Activated CD4-positive, alpha-beta T cell treated with anti-CD3 and anti-CD28 coated beads for 36 hours (primary cell): ENCODE measurements at regions of chr17 and their contacts with region 1.

Region 1: DNA sequence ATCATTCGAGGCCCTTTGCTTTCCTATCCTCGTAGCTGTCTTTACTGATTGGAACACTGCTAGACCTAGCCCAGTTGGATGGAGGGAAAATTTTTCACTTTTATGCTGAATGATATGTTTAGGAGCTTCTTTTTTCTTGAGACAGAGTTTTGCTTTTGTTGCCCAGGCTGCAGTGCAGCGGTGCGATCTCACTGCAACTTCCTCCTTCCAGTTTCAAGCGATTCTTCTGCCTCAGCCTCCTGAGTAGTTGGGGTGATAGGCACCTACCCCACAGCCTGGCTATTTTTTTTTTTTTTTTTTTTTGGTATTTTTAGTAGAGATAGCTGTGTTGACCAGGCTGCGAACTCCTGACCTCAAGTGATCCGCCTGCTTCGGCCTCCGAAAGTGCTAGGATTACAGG is 17.3 kb upstream of the PSMC5 start:
- DNase-seq: no peak
- ATAC-seq: no peak
- H3K4me3 Mint-ChIP-seq: no peak overlapping the region
- H3K27ac Mint-ChIP-seq: no peak overlapping the region
- H3K4me1 Mint-ChIP-seq: peaks cover 7% of the 10 kb centered on the region
- H3K27me3 Mint-ChIP-seq: no peaks in the 10 kb centered on the region

Region 2: DNA sequence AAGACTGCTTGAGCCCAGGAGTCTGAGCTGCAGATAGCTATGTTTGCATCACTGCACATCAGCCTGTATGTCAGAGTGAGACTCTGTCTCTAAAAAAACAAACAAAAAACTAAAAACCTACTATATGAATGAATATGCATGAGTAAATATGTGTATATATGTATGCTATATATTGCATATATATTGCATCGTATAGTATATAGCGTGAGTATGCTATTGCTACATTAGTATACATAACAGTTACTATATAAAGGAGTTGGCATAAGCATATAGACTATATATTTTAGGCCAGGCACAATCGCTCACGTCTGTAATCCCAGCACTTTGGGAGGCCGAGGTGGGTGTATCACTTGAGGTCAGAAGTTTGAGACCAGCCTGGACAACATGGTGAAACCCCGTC is 19.9 kb before region 1 on chr17:
- CTCF ChIA-PET with region 1: interaction called, 3 read pairs
- POLR2A ChIA-PET with region 1: no interaction called
- intact Hi-C with region 1: loop called in 1 of 2 experiments (anchors 2 kb)
- DNase-seq: no peak
- ATAC-seq: no peak
- H3K4me3 Mint-ChIP-seq: no peak overlapping the region
- H3K27ac Mint-ChIP-seq: no peak overlapping the region
- H3K4me1 Mint-ChIP-seq: peaks cover 5% of the 10 kb centered on the region
- H3K27me3 Mint-ChIP-seq: no peaks in the 10 kb centered on the region

Region 3: DNA sequence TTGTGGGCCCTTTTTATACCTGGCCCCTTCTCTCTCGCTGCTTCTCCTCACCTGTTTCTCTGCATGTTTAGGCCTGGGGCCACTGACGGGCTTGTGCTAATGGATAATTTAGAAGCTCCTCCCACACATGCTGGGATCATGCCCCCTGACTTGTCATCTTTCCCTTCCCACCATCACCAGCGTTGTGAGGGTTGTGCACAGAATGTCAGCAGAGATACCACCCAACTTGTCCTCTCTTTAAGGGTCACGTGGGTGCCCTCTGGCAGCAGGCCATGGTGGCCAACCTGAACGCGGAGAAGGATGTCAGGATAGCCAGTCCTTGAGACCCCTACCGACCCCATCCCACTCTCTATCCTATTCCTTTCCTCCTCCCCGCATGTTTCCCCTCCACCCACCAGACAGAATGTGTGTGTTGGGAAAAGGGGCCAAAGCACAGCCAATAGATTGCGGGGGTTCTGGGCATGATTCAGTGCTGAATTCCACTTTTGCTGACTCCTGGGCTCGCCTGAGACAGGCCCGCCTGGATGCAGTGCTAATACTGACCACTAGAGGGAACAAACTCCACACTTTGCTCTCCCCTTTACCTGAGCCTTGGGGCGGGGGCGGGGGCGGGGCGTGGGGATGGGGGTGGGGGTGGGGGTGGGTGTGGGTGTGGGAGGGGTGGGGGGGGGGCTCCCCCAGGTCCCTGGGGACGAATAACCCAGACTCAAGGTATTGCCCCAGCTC is 72.1 kb after region 1 on chr17 and contains the start of gene GH2:
- CTCF ChIA-PET with region 1: no interaction called
- POLR2A ChIA-PET with region 1: no interaction called
- intact Hi-C with region 1: no loop called
- DNase-seq: peak; percentile 77
- ATAC-seq: peak; percentile 96
- H3K4me3 Mint-ChIP-seq: no peak within 1 kb of the TSS
- H3K27ac Mint-ChIP-seq: no peak within 1 kb of the TSS
- H3K4me1 Mint-ChIP-seq: no peaks in the 10 kb centered on the region
- H3K27me3 Mint-ChIP-seq: no peaks in the 10 kb centered on the region
- total RNA-seq, gene GH2: not detected